ENCODE measurements at regions of chr5 and their contacts with region 1.

Region 1: GRCh38 chr5:119966028-119966427 is 336.7 kb downstream of the FAM170A start:
- DNase-seq: no peak
- ATAC-seq: peak; percentile 79

Region 2: DNA sequence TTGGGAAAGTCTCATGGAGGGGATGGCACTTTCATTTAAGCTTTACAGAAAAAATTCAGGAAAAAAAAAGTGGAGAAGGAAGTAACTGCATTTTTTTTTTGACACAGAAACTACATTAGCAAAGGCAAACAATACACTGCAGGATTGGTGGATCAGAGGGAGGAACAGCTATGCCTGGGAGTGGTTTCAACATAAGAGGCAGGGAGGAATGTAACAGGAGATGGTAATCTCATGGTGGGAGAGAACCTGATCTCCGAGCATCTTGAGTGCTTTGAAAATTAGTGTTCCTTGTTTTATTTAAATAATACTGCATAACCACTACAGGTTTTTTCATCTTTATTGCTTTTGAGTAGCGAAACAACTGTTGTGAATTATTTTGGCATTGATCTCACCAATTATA is 87.3 kb before region 1 on chr5:
- intact Hi-C with region 1: no loop called
- DNase-seq: no peak
- ATAC-seq: no peak

Region 3: GRCh38 chr5:119913425-119913824 is 52.6 kb before region 1 on chr5:
- intact Hi-C with region 1: no loop called
- DNase-seq: no peak
- ATAC-seq: no peak

Region 4: GRCh38 chr5:120463991-120464626 is 498.1 kb after region 1 on chr5 and contains the start of gene PRR16:
- intact Hi-C with region 1: loop called (anchors 10 kb)
- DNase-seq: peak; percentile 72
- ATAC-seq: peak; percentile 94
- total RNA-seq, gene PRR16: 14.2 TPM